CD8-positive, alpha-beta memory T cell (primary cell): ENCODE measurements at regions of chr1 and their contacts with region 1.

Region 1: DNA sequence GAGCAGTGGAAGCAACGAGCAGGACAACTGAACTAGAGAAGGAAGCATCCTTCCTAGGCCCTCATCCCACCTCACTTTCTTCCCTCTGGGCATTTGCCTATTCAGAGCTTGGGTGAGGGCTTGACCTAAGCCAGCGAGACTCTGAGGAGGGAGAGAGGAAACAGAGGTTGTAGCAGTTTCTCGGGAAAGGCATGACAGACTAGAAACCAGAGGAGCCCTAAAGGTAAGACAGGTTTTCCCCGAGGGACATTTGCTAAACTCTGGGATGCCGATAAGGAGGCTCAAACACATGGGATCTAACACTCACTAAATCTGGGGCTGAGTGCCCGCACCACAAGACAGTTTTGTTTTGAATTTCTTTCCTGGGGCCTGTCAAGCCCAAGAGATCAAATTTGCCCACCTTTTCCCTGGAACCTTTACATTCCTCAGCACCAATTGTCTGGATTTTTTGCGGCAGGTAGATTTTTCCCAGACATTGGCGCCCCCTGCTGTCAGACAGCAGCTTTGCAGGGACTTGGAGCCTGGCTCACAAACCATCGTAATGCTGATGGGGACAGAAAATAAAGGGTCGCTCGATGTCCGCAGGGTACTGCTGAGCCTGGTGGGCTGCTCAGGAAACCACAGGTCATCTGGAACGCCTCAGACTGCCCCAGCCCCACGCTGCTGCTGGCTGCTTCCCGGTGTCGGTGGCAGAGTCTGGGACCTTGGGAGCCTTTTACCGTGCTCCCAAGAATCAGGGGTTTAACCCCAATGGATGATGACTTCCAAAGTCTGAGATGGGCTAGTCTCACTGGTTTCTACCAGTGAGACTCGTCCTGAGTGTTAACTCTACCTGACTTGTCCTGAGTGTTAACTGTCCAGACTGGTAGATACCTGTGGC is 23.4 kb upstream of the TSPAN2 start:
- DNase-seq: peak; percentile 40 to 66 (median 48)
- H3K4me3 ChIP-seq: no peak overlapping the region
- H3K4me3 Mint-ChIP-seq: no peak overlapping the region
- H3K27ac ChIP-seq: no peak overlapping the region
- H3K27ac Mint-ChIP-seq: peak overlapping the region in 3 of 8 donors; percentile 12 to 70 (median 38)
- H3K4me1 ChIP-seq: no peaks in the 10 kb centered on the region
- H3K4me1 Mint-ChIP-seq: peaks cover 9 to 26% (median 13%) of the 10 kb centered on the region in 3 donors
- H3K27me3 ChIP-seq: no peaks in the 10 kb centered on the region
- H3K27me3 Mint-ChIP-seq: no peaks in the 10 kb centered on the region

Region 2: DNA sequence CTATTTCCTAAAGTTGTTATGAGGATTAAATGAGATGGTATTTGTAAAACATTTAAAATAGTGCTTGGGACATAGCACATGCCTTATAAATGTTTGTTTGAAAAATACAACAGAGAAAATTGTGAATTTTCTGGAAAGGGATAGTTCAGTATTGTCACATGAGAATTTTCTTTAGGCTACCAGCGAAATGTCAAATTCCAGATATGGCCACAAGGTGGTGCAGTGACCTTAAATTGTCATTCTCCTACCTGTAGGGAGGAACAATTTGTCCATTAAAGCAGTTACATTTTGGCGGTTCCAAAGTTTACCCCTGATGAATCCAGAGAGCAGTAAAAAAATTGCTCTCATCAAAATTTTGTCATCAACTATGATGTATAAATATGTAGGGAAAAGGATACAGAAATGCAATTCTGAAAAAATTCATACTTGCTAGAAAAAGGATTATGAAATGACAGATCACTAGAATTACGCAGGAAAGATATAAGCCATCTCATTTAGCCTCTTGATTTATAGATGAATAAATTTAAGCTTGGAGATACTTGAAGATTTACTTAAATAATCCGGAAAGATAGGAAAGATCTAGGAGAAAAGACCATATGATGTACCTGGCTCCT is 133.4 kb before region 1 on chr1:
- CTCF ChIA-PET with region 1: interaction called, 31 read pairs
- POLR2A ChIA-PET with region 1: no interaction called
- DNase-seq: peak; percentile 48 to 68 (median 58)
- H3K4me3 ChIP-seq: no peak overlapping the region
- H3K4me3 Mint-ChIP-seq: no peak overlapping the region
- H3K27ac ChIP-seq: no peak overlapping the region
- H3K27ac Mint-ChIP-seq: no peak overlapping the region
- H3K4me1 ChIP-seq: no peaks in the 10 kb centered on the region
- H3K4me1 Mint-ChIP-seq: no peaks in the 10 kb centered on the region
- H3K27me3 ChIP-seq: no peaks in the 10 kb centered on the region
- H3K27me3 Mint-ChIP-seq: peaks cover 3 to 48% of the 10 kb centered on the region in 2 donors

Region 3: GRCh38 chr1:115052454-115053083 is 60.2 kb before region 1 on chr1:
- CTCF ChIA-PET with region 1: interaction called, 28 read pairs
- POLR2A ChIA-PET with region 1: no interaction called
- DNase-seq: peak; percentile 26 to 71 (median 34)
- H3K4me3 ChIP-seq: no peak overlapping the region
- H3K4me3 Mint-ChIP-seq: no peak overlapping the region
- H3K27ac ChIP-seq: no peak overlapping the region
- H3K27ac Mint-ChIP-seq: no peak overlapping the region
- H3K4me1 ChIP-seq: no peaks in the 10 kb centered on the region
- H3K4me1 Mint-ChIP-seq: peaks cover 2 to 5% (median 3%) of the 10 kb centered on the region in 3 donors
- H3K27me3 ChIP-seq: no peaks in the 10 kb centered on the region
- H3K27me3 Mint-ChIP-seq: peaks cover 0 to 1% of the 10 kb centered on the region in 2 donors

Region 4: GRCh38 chr1:115189814-115190539 is 77.2 kb after region 1 on chr1:
- CTCF ChIA-PET with region 1: no interaction called
- POLR2A ChIA-PET with region 1: no interaction called
- DNase-seq: no peak
- H3K4me3 ChIP-seq: no peak overlapping the region
- H3K4me3 Mint-ChIP-seq: no peak overlapping the region
- H3K27ac ChIP-seq: no peak overlapping the region
- H3K27ac Mint-ChIP-seq: no peak overlapping the region
- H3K4me1 ChIP-seq: no peaks in the 10 kb centered on the region
- H3K4me1 Mint-ChIP-seq: peaks cover 0 to 5% (median under 1%) of the 10 kb centered on the region in 3 donors
- H3K27me3 ChIP-seq: no peaks in the 10 kb centered on the region
- H3K27me3 Mint-ChIP-seq: peaks cover 11 to 12% of the 10 kb centered on the region in 2 donors